ENCODE measurements at regions of chr11 and their contacts with region 1.

Region 1: GRCh38 chr11:34357701-34358257 is at the start of gene ABTB2:
- H3K4me3 Mint-ChIP-seq: peak within 1 kb of the TSS; percentile 83
- H3K27ac Mint-ChIP-seq: peak within 1 kb of the TSS; percentile 70
- H3K4me1 Mint-ChIP-seq: peaks cover 46% of the 10 kb centered on the region
- H3K27me3 Mint-ChIP-seq: peaks cover 34% of the 10 kb centered on the region

Region 2: DNA sequence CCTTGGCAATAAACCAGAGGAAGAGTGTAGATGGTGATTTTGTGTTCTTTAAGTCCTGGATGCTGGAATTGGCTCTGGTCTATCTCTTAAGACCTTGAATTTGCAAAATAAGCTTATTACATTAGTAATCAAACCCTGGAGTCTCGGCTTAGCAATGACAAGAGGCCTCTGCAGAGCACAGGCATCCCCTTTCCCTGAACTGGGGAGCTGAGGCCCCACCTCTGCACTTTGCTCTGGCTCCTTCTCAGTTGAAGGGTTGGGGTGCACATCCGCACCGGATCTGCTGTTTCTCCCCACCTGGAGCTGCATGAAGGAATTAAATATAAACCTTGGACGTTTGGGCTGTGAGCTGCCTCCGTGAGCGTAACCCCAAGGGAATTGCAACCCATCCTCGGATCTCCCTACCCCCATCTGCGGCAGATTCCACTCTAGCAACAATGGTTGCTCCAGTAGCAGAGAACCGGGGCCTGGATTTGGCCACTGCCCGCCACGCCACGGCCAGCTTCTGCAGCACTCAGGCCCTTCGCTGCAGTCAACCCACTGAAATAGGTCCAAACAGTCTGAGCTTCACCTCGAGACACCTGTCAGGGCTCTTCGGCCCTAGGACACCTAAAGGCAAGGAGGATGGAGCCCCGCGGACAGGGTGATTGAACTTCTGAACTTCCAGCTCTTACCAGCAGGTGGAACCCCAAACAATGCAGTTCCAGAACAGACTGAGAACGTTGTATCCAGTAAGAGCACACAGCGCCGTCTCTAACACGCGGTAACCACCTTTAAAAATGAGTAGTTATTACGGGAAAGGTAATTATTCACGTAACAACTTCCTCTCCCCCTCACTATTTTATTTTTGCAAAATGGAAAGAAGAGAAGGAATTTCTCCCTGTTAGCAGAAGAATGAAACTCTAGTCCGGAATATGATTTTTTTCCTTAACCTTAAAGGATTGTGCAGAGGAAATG is 361.0 kb before region 1 on chr11:
- intact Hi-C with region 1: loop called (anchors 1 kb)
- H3K4me3 Mint-ChIP-seq: peak overlapping the region; percentile 9
- H3K27ac Mint-ChIP-seq: no peak overlapping the region
- H3K4me1 Mint-ChIP-seq: peaks cover 12% of the 10 kb centered on the region
- H3K27me3 Mint-ChIP-seq: peaks cover 27% of the 10 kb centered on the region

Region 3: DNA sequence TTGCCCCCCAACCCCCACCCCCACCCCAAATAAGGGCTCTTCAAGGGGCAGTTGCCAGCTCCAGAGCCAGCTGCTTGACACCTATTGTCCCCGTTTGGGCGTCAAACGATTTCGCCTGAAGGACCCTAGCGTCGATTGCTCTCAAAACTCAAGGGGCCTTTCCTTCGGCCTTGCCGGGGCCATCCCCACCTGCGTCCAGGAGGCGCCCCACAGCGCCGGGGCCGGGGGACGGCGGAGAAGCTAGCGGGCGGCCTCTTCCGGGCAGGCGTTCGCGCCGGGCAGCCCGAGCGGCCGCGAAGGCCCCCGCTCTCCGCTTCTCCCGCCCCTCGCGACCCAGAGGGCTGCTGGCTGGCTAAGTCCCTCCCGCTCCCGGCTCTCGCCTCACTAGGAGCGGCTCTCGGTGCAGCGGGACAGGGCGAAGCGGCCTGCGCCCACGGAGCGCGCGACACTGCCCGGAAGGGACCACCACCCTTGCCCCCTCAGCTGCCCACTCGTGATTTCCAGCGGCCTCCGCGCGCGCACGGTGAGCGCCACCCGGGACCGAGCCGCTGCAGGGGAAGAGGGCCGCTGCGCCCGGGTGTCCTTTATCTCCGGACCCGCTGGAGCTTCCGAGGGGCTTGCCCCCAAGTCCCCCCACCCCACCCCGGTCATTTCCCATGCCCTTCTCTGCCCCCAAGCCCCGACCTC is 306.3 kb before region 1 on chr11 and contains the start of gene CAPRIN1:
- intact Hi-C with region 1: loop called (anchors 2 kb)
- H3K4me3 Mint-ChIP-seq: peak within 1 kb of the TSS; percentile 97
- H3K27ac Mint-ChIP-seq: peak within 1 kb of the TSS; percentile 94
- H3K4me1 Mint-ChIP-seq: peaks cover 32% of the 10 kb centered on the region
- H3K27me3 Mint-ChIP-seq: no peaks in the 10 kb centered on the region

Region 4: DNA sequence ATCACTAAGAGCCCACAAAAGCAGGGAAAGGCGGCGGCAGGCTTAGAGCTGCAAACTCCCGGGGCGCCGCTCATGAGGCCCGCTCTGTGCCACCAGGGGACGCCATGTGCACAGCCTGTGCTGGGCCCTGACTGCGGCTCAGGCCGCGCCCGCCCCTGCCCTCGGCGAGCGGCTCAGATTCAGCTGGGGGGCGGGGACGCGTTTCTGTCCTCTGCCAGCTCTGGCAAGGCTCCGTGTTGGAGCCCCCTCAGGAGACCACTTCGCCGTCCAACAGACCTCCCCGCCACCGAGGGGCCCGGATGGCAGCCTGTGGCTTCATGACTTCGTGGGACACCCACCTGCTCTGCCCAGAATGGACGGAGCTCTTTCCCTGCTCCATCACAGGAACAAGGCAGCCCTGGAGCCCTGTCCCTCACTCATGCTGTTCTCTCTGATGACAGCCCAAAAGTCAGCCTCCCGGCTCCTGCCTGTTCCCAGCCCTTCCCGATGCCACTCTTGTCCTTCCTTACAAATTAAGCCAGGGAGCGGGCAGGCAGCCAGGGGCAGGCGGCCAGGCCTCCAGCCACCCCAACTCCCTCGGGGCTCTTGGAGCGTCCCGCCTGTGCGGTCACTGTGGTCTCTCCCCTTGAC is 183.3 kb before region 1 on chr11:
- intact Hi-C with region 1: loop called (anchors 1 kb)
- H3K4me3 Mint-ChIP-seq: peak overlapping the region; percentile 70
- H3K27ac Mint-ChIP-seq: peak overlapping the region; percentile 24
- H3K4me1 Mint-ChIP-seq: peaks cover 26% of the 10 kb centered on the region
- H3K27me3 Mint-ChIP-seq: peaks cover 9% of the 10 kb centered on the region

Region 5: GRCh38 chr11:34250732-34251639 is 106.8 kb before region 1 on chr11:
- intact Hi-C with region 1: loop called (anchors 10 kb)
- H3K4me3 Mint-ChIP-seq: peak overlapping the region; percentile 20
- H3K27ac Mint-ChIP-seq: peak overlapping the region; percentile 55
- H3K4me1 Mint-ChIP-seq: peaks cover 38% of the 10 kb centered on the region
- H3K27me3 Mint-ChIP-seq: no peaks in the 10 kb centered on the region

Region 6: DNA sequence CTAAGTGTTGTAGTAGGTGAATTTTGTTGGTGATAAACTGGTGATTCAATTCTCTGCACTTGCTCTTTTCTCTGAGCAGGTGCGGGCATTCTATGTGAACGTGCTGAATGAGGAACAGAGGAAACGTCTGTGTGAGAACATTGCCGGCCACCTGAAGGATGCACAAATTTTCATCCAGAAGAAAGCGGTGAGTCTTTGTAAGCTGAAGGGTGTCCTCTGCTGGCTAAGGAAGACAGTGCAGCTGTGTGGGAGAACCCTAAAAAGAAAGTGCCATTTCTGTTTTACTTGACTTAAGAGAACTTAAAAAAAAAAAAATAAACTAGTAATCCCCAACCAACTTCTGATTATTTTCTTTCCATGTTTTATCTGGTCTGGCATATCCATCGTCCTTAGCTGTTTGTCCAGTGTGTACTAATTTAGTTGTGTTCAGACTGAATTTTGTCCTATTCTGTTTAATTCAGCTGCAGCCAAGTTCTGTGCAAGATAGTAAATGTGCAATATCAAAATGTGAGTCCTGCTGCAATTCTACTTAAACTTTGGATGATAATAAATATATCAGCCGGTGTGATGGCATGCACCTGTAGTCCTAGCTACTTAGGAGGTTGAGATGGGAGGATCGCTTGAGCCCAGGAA is 110.5 kb after region 1 on chr11:
- intact Hi-C with region 1: loop called (anchors 2 kb)
- H3K4me3 Mint-ChIP-seq: no peak overlapping the region
- H3K27ac Mint-ChIP-seq: no peak overlapping the region
- H3K4me1 Mint-ChIP-seq: peaks cover 10% of the 10 kb centered on the region
- H3K27me3 Mint-ChIP-seq: no peaks in the 10 kb centered on the region

Measured in dendritic cell treated with granulocyte-macrophage colony-stimulating factor and Interleukin-4, amounts not matched to agents 40 ng/mL and 50 ng/mL, for 4 days (primary cell).